ENCODE measurements at regions of chr17 and their contacts with region 1.

Region 1: DNA sequence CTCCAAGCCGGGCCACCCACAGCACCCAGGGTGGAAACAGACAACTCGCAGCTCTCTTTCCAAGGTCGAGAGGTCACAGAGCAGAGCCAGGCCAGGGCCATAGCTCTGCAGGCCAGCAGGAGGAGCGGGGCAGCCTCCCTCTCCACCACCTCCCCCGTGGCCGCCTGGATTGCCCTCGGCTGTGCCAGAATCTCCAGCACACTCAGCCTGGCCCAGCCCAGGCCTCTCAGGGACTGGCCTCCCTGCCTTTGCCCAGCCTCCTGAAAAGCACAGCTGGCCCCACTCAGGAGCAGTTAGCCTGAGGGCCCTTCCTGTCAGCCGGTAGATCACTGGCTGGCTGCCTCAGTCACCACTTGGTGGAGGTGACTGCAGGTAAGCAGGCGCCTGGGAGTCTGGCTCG is 85.8 kb upstream of the SEC14L1 start:
- DNase-seq: no peak
- H3K4me3 ChIP-seq: no peak overlapping the region
- H3K27me3 ChIP-seq: peaks cover 36% of the 10 kb centered on the region
- CTCF ChIP-seq: no peak

Region 2: GRCh38 chr17:76816590-76817135 is 238.3 kb before region 1 on chr17:
- CTCF ChIA-PET with region 1: interaction called, 11 read pairs
- POLR2A ChIA-PET with region 1: no interaction called
- DNase-seq: no peak
- H3K4me3 ChIP-seq: no peak overlapping the region
- H3K27me3 ChIP-seq: peaks cover 5% of the 10 kb centered on the region
- CTCF ChIP-seq: peak; percentile 74

Region 3: DNA sequence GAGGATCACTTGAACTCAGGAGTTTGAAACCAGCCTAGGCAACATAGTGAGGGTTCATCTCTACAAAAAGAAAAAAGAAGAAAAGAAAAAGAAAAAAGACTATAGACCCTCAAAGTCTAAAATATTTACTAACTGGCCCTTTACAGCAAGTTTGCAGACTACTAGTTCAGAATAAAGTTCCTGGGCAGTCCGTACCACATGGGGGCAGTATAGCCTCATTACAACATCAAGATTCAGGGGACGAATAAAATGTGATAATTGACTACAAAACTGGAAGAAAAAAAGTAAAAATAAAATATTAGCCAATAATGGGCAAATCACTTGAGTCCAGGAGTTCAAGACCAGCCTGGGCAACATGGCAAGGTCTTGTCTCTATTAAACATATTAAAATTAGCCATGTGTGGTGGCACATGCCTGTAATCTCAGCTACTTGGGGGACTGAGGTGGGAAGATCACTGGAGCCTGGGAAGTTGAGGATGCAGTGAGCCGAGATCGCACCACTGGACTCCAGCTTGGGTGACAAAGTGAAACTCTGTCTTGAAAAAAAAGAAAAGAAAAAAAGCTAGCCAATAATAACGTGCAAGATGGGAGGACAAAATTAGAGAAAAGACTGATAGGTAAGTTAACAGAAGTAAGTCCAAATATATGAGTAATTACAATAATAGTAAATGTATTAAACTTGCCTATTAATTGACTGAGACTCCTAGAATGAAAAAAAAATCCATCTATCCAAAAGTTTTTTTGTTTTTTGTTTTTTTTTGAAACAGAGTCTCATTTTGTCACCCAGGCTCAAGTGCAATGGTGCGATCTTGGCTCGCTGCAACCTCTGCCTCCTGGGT is 43.5 kb before region 1 on chr17:
- CTCF ChIA-PET with region 1: interaction called, 22 read pairs
- POLR2A ChIA-PET with region 1: no interaction called
- DNase-seq: no peak
- H3K4me3 ChIP-seq: no peak overlapping the region
- H3K27me3 ChIP-seq: no peaks in the 10 kb centered on the region; the same call in 1 of the 2 replicates
- CTCF ChIP-seq: peak; percentile 73

Region 4: DNA sequence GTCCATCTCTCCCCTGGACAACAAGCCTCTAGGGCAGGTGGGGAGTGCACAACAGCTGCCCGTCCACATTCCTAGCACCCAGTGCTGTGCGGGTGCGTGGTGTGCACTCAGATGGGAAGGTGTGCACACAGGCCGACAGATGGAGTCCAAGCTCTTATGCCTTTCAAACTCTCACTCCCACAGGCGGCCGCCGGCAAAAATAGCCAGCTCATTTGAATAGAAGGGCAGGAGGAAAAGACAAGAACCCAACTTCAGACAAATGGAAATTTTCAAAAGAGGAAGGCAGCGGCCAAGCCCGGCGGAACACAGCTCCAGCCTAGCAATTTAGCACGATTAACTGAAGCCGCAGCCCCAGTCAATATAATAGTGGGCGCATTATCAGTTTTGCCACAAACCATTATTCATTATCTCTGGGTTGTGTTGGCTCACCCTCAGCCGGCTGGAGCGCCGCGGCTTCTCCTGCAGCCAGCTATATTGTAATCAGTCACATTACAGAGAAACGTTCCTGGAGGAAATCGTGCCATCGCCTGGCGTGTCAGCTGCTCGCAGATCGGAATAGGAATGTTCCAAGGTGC is 18.0 kb before region 1 on chr17:
- CTCF ChIA-PET with region 1: interaction called, 66 read pairs
- POLR2A ChIA-PET with region 1: no interaction called
- DNase-seq: no peak
- H3K4me3 ChIP-seq: no peak overlapping the region
- H3K27me3 ChIP-seq: peaks cover 16% of the 10 kb centered on the region
- CTCF ChIP-seq: no peak

Region 5: GRCh38 chr17:77076124-77076872 is 21.4 kb after region 1 on chr17:
- CTCF ChIA-PET with region 1: interaction called, 74 read pairs
- POLR2A ChIA-PET with region 1: no interaction called
- DNase-seq: no peak
- H3K4me3 ChIP-seq: no peak overlapping the region
- H3K27me3 ChIP-seq: peaks cover 21% of the 10 kb centered on the region
- CTCF ChIP-seq: no peak

Measured in BJ (cell line).